Activated B cell treated with CpG ODN at 0.5 μM for 24 hours (primary cell): ENCODE measurements at regions of chr19 and their contacts with region 1.

Region 1: GRCh38 chr19:55258828-55259539 is at the start of gene PPP6R1:
- DNase-seq: peak; percentile 94
- ATAC-seq: peak; percentile 75
- H3K4me3 Mint-ChIP-seq: peak within 1 kb of the TSS; percentile 98
- H3K27ac Mint-ChIP-seq: peak within 1 kb of the TSS; percentile 100
- H3K4me1 Mint-ChIP-seq: peaks cover 52% of the 10 kb centered on the region
- H3K27me3 Mint-ChIP-seq: no peaks in the 10 kb centered on the region
- CTCF ChIP-seq: no peak
- total RNA-seq, gene PPP6R1: 203 and 220 TPM in 2 replicates

Region 2: GRCh38 chr19:54463531-54464043 is 795.4 kb before region 1 on chr19 and contains the start of gene LENG9:
- CTCF ChIA-PET with region 1: no interaction called
- POLR2A ChIA-PET with region 1: interaction called, 4 read pairs
- intact Hi-C with region 1: loop called (anchors 5 kb)
- DNase-seq: peak; percentile 85
- ATAC-seq: peak; percentile 61
- H3K4me3 Mint-ChIP-seq: peak within 1 kb of the TSS; percentile 82
- H3K27ac Mint-ChIP-seq: peak within 1 kb of the TSS; percentile 90
- H3K4me1 Mint-ChIP-seq: peaks cover 28% of the 10 kb centered on the region
- H3K27me3 Mint-ChIP-seq: no peaks in the 10 kb centered on the region
- CTCF ChIP-seq: no peak
- total RNA-seq, gene LENG9: 6.3 and 8.5 TPM in 2 replicates

Region 3: GRCh38 chr19:55109527-55110291 is 149.3 kb before region 1 on chr19:
- CTCF ChIA-PET with region 1: no interaction called
- POLR2A ChIA-PET with region 1: no interaction called
- intact Hi-C with region 1: no loop called
- DNase-seq: no peak
- ATAC-seq: no peak
- H3K4me3 Mint-ChIP-seq: no peak overlapping the region
- H3K27ac Mint-ChIP-seq: no peak overlapping the region
- H3K4me1 Mint-ChIP-seq: peaks cover 19% of the 10 kb centered on the region
- H3K27me3 Mint-ChIP-seq: no peaks in the 10 kb centered on the region
- CTCF ChIP-seq: no peak

Region 4: DNA sequence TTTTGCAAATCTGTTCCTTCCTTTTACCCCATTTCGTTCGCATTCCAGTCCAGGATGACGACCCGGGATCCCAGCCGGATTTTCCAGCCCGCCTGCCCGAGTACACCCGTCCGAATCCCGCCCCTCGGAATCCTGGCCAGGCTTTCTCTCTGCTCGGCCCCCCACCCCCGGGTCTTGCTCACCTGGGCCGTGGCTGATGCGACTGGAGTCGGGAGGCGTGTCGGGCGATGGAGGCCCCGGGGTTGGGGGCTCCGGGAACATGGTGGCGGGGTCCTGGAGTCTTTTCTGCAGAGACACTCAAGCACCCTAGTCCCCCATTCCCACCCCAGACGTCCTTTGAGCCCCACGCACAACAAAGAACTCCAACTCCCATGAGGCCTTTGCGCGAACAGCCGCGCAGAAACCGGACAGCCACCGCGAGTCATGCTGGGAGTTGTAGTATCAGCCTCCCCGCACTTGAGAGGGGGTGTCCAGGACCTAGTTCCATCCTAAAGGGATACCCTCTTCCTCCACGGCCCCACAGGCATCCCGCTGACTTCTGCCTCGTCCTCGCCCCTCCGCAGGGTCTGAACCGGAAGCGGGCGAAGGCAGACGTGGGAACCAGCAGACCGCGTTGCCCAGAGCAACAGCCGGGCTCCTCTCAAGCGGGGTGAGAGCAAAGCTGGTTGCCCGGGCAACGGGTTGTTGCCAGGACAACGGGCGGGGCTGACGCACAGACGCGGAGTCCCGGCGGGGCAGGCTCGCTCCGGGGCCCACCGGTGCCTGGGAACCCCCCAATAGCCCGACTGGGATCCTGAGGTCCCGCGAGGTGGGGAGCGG is 80.0 kb before region 1 on chr19:
- CTCF ChIA-PET with region 1: no interaction called
- POLR2A ChIA-PET with region 1: interaction called, 7 read pairs
- intact Hi-C with region 1: loop called (anchors 1 kb)
- DNase-seq: peak; percentile 94
- ATAC-seq: peak; percentile 84
- H3K4me3 Mint-ChIP-seq: peak overlapping the region; percentile 79
- H3K27ac Mint-ChIP-seq: peak overlapping the region; percentile 75
- H3K4me1 Mint-ChIP-seq: peaks cover 22% of the 10 kb centered on the region
- H3K27me3 Mint-ChIP-seq: peaks cover 69% of the 10 kb centered on the region
- CTCF ChIP-seq: no peak

Region 5: GRCh38 chr19:55279770-55280643 is 21.0 kb after region 1 on chr19 and contains the start of gene HSPBP1:
- CTCF ChIA-PET with region 1: interaction called, 5 read pairs
- POLR2A ChIA-PET with region 1: interaction called, 277 read pairs
- intact Hi-C with region 1: loop called (anchors 1 kb)
- DNase-seq: peak; percentile 97
- ATAC-seq: peak; percentile 83
- H3K4me3 Mint-ChIP-seq: peak within 1 kb of the TSS; percentile 100
- H3K27ac Mint-ChIP-seq: peak within 1 kb of the TSS; percentile 98
- H3K4me1 Mint-ChIP-seq: peaks cover 73% of the 10 kb centered on the region
- H3K27me3 Mint-ChIP-seq: peaks cover 4% of the 10 kb centered on the region
- CTCF ChIP-seq: no peak
- total RNA-seq, gene HSPBP1: 32.2 and 32.9 TPM in 2 replicates

Region 6: DNA sequence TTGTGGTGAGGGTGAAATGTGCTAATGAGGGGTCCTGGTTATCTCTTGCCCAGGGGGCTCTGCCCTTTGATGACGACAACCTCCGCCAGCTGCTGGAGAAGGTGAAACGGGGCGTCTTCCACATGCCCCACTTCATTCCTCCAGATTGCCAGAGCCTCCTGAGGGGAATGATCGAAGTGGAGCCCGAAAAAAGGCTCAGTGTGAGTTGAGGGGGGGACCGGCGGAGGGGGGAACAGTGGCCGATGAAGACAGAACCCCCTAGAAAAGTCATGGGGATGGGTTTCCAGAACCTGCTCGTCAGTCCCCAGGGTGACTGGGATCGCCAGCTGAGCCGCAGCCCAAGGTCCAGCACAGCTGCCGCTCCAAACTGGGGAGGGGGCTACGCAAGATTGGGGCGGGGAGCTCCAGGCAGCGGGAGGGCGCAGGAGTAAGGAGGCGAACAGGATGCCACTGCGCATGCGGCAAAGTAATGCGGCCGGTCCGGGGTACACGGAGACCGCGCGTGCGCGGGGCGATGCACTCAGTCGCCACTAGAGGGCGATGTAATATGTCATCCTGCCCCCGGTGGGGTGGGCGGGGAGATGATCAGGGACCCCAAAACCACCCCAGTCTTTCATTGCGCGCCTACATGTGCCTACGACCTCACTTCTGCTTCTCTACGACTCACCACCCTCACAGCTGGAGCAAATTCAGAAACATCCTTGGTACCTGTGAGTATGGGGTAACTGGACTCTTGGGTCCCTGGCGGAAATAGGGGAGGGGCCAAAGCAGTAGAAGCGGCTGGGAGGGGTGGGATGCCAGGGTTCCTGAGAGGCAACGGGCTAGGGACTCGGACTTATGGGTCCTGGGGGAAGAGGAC is 42.7 kb after region 1 on chr19:
- CTCF ChIA-PET with region 1: interaction called, 14 read pairs
- POLR2A ChIA-PET with region 1: interaction called, 12 read pairs
- intact Hi-C with region 1: loop called (anchors 2 kb)
- DNase-seq: peak; percentile 95
- ATAC-seq: peak; percentile 91
- H3K4me3 Mint-ChIP-seq: peak overlapping the region; percentile 75
- H3K27ac Mint-ChIP-seq: peak overlapping the region; percentile 37
- H3K4me1 Mint-ChIP-seq: peaks cover 8% of the 10 kb centered on the region
- H3K27me3 Mint-ChIP-seq: no peaks in the 10 kb centered on the region
- CTCF ChIP-seq: peak; percentile 90

Region 7: DNA sequence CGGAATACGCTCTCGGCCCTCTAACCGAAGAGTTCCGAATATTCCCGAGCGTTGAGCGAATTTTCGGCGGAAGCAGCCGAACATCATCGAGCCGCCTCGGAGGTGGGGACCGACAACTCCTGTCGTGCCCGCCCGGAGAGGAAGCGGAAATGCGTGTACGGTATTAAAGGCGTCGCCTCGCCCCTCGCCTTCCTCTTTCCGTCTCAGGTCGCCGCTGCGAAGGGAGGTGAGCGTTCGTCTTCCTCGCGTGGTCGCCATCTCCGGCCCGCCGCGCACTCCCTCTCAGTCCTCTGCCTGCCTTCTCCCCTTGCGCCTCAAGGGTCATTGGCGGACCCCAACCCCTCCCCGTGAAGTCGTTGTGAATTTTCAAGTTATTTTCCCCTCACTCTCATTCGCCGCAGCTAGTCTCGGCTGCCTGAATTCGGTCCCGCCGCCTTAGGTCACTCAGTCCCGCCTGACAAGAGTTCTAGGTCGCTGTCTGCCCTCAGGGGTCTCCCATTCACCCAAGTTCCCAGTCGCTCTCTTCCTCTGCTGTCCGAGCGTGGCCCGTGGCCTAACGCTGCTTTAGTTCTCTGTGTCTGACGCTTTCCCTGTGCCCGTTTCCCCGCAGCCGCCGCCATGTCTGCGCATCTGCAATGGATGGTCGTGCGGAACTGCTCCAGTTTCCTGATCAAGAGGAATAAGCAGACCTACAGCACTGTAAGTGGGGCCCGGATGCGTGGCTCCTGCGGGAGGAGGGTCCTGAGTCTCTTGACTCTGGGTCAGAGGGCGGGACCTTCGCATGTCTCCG is 127.0 kb after region 1 on chr19 and contains the start of gene RPL28:
- CTCF ChIA-PET with region 1: interaction called, 3 read pairs
- POLR2A ChIA-PET with region 1: interaction called, 29 read pairs
- intact Hi-C with region 1: loop called (anchors 1 kb)
- DNase-seq: peak; percentile 95
- ATAC-seq: peak; percentile 79
- H3K4me3 Mint-ChIP-seq: peak within 1 kb of the TSS; percentile 100
- H3K27ac Mint-ChIP-seq: peak within 1 kb of the TSS; percentile 99
- H3K4me1 Mint-ChIP-seq: peaks cover 67% of the 10 kb centered on the region
- H3K27me3 Mint-ChIP-seq: no peaks in the 10 kb centered on the region
- CTCF ChIP-seq: no peak
- total RNA-seq, gene RPL28: 3,790 and 4,042 TPM in 2 replicates

Region 8: GRCh38 chr19:55643348-55644176 is 384.6 kb after region 1 on chr19 and contains the start of gene ZNF581:
- CTCF ChIA-PET with region 1: no interaction called
- POLR2A ChIA-PET with region 1: interaction called, 10 read pairs
- intact Hi-C with region 1: loop called (anchors 5 kb)
- DNase-seq: peak; percentile 84
- ATAC-seq: peak; percentile 51
- H3K4me3 Mint-ChIP-seq: peak within 1 kb of the TSS; percentile 86
- H3K27ac Mint-ChIP-seq: peak within 1 kb of the TSS; percentile 96
- H3K4me1 Mint-ChIP-seq: peaks cover 66% of the 10 kb centered on the region
- H3K27me3 Mint-ChIP-seq: no peaks in the 10 kb centered on the region
- CTCF ChIP-seq: no peak
- total RNA-seq, gene ZNF581: 42.7 and 46.5 TPM in 2 replicates